Left ventricle myocardium inferior (tissue), 1 donor: ENCODE measurements at regions of chr6 and their contacts with region 1.

Region 1: DNA sequence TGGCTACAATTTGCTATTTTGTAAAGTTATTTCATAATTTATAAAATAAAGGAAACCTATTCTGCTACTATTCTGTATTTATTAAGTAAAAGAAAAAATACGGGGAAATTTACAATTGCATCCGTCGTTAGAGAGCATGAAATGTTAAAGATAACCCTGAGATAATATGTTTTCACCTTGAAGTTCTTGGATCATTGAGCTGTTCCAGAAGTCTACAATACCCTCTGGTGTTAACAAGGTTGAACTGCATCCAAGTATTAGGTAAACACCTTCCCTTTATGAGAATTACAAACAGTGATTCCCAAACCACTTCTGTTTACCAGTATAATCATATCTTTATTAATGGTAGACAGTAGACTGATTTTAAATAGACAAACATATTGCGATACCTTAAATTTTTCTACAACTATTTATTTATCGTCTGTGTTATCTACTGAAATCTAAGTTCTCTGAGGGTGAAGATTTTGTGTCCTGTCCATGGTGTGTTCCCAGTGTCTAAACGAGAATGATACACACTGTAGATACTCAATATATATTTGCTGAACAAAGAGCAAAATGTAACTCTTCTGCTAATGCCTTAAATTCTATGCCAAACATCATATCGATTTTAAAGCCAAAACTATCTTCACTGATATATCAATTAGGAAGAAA is 28.2 kb downstream of the TBC1D32 start:
- DNase-seq: no peak
- H3K4me3 ChIP-seq: no peak overlapping the region
- H3K27ac ChIP-seq: no peak overlapping the region
- H3K4me1 ChIP-seq: no peaks in the 10 kb centered on the region
- H3K27me3 ChIP-seq: no peaks in the 10 kb centered on the region
- CTCF ChIP-seq: peak; percentile 64

Region 2: GRCh38 chr6:121055572-121056163 is 250.4 kb before region 1 on chr6:
- intact Hi-C with region 1: loop called (anchors 10 kb)
- DNase-seq: no peak
- H3K4me3 ChIP-seq: no peak overlapping the region
- H3K27ac ChIP-seq: no peak overlapping the region
- H3K4me1 ChIP-seq: no peaks in the 10 kb centered on the region
- H3K27me3 ChIP-seq: no peaks in the 10 kb centered on the region
- CTCF ChIP-seq: peak; percentile 82